Panc1 (cell line): ENCODE measurements at regions of chr3 and their contacts with region 1.

Region 1: GRCh38 chr3:76024640-76025039 is 239.3 kb upstream of the ZNF717 start:
- DNase-seq: no peak
- ATAC-seq: no peak
- H3K4me3 ChIP-seq: no peak overlapping the region
- H3K27ac ChIP-seq: no peak overlapping the region
- H3K4me1 ChIP-seq: no peaks in the 10 kb centered on the region
- H3K27me3 ChIP-seq: no peaks in the 10 kb centered on the region
- CTCF ChIP-seq: peak; percentile 28; the same call in 1 of the 2 replicates

Region 2: DNA sequence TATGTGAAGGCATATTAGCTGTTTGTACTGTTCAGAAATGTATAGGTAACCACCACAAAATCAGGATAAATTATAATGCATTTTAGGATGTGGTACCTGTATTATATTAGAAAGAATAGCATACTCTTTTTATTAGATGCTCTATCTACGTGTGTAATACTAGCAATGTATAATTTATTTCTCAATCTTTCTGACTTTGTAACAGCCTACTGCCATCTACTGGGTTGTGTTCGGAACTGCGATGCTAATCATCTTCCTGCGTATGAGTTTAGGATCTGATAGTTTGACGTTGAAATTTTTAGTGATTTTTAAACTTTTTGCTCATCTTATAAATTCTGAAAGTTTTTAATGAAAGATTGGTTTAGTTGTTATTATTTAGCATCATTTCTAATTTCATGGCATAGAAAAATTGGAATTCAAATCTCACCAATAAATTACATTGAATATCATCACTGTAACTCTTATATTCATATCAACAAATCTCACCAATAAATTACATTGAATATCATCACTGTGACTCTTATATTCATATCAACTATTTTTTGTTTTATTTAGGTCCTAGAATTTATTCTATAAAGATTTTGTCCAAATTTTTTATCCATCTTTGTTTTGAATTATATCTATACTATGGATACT is 83.4 kb after region 1 on chr3:
- CTCF ChIA-PET with region 1: no interaction called
- POLR2A ChIA-PET with region 1: no interaction called
- in situ Hi-C with region 1: no loop called
- intact Hi-C with region 1: loop called (anchors 5 kb)
- DNase-seq: no peak
- ATAC-seq: no peak
- H3K4me3 ChIP-seq: no peak overlapping the region
- H3K27ac ChIP-seq: no peak overlapping the region
- H3K4me1 ChIP-seq: no peaks in the 10 kb centered on the region
- H3K27me3 ChIP-seq: no peaks in the 10 kb centered on the region
- CTCF ChIP-seq: peak; percentile 65; the same call in 1 of the 2 replicates